ENCODE measurements at regions of chr1 and their contacts with region 1.

Region 1: DNA sequence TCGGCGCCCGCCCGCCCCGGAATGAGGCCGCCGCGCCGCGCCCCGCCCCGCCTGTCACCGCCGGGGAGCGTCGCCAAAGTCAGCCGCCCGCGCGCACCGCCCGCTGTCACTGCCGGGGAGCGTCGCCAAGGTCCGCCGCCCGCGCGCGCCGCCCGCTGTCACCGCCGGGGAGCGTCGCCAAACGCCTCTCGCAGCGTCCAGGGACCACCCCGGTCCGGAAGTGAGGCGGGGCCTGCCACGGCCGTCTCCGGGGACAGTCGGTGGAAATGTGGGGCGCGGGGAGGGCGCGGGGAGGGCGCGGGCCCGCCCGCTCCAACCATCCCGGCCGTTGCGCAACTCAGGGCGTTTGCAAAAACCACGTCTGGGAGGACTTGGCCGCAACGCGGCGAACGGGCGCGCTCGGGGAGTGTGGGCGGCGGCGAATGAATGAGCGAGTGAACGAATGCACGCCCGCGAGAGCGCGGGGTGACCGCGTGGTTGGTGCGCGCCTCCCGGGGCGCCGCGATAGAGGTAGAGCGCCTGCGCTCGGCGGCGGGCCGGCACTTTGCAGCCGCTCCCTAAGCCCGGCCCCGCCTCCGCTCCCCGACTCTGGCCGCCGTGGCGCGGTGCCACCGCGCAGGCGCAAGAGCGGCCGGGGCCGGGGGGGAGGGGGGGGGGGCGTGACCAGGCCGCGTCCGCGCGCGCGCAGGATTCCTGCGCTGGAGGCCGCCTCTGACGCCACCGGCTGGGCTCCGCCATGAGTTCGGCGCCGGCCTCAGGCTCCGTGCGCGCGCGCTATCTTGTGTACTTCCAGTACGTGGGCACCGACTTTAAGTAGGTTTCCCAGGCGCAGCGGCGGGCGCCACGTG is at the starts of genes ACAP3 and PUSL1:
- DNase-seq: peak; percentile 94
- ATAC-seq: peak; percentile 73
- H3K4me3 Mint-ChIP-seq: peak within 1 kb of the TSS; percentile 80
- H3K27ac Mint-ChIP-seq: peak within 1 kb of the TSS; percentile 84
- H3K4me1 Mint-ChIP-seq: peaks cover 23% of the 10 kb centered on the region
- H3K27me3 Mint-ChIP-seq: no peaks in the 10 kb centered on the region
- total RNA-seq, gene ACAP3: 17.5 to 24.3 TPM
- total RNA-seq, gene PUSL1: 13.7 to 18.0 TPM

Region 2: GRCh38 chr1:1019122-1019999 is 288.8 kb before region 1 on chr1:
- CTCF ChIA-PET with region 1: no interaction called
- POLR2A ChIA-PET with region 1: no interaction called
- intact Hi-C with region 1: loop called in 1 of 2 experiments (anchors 1 kb)
- DNase-seq: peak; percentile 90
- ATAC-seq: peak; percentile 75
- H3K4me3 Mint-ChIP-seq: peak overlapping the region; percentile 59
- H3K27ac Mint-ChIP-seq: no peak overlapping the region
- H3K4me1 Mint-ChIP-seq: peaks cover 15% of the 10 kb centered on the region
- H3K27me3 Mint-ChIP-seq: peaks cover 9% of the 10 kb centered on the region

Region 3: DNA sequence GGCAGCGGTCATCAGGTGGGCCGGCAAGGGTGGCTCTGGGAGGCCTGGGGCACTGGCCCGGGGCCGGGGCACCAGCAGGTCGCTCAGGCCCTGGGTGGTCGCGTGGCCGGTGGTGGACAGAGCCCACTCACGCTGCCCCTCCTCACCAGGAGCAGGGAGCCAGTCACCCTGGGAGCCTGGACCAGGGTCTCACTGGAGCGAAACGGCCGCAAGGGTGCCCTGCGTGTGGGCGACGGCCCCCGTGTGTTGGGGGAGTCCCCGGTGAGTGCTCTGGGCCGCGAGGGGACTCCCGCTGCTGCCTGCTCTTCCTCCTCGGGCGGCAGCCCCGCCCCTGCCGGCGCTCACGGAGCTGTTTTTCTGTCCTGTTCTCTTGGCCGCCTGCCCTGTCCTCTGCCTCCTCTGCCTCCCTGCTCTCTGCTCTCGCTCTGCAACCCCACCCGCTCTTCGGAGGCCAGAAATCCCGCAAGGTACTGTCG is 257.5 kb before region 1 on chr1:
- CTCF ChIA-PET with region 1: no interaction called
- POLR2A ChIA-PET with region 1: no interaction called
- intact Hi-C with region 1: no loop called
- DNase-seq: no peak
- ATAC-seq: no peak
- H3K4me3 Mint-ChIP-seq: no peak overlapping the region
- H3K27ac Mint-ChIP-seq: no peak overlapping the region
- H3K4me1 Mint-ChIP-seq: no peaks in the 10 kb centered on the region
- H3K27me3 Mint-ChIP-seq: no peaks in the 10 kb centered on the region

Region 4: DNA sequence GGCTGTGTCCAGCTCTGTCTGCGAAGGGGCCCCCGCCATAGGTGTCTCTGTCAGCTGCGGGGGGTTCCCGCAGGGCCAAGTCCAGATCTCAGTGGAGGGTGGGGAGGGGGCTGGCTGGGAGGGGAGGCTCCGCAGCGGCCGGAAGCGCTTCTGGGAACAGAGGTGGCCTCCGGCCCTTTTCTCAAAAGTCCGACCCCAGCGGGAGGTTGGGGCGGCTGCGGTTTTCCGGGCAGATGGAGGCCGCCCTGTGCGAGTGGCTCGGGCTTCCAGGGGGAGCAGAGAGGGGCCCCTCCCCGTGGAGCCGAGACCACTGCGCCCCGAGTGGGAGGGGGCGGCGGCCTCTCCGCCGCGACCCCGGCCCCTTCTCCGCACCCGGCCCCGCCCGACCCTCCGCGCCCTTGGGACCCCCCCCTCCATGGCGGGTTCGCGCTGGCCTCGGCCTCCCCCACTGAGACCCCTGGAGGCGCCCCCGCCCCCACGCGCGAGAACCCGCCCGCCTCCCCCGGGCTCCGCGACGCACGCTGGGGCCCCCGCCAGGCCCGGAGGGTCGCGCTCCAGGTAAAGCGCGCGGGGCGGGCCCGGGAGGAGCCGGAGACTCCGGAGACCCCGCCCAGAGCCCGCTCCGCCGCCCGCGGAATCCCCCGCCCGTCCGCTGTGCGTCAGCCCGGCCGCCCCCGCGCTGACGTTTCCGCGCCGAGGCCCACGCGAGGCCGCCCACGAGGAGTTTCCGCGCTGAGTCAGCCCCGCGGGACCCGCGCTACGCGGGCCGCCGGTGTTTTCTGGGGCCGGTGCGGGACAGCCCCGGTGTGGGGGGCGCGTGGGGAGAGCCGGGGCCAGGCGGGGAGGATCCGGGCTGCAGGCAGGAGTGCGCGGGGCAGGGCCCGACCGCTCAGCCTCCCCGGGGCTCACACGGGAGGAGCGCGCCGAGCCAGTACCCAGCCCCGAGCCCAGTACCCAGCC is 107.0 kb before region 1 on chr1:
- CTCF ChIA-PET with region 1: no interaction called
- POLR2A ChIA-PET with region 1: no interaction called
- intact Hi-C with region 1: loop called in 1 of 2 experiments (anchors 1 kb)
- DNase-seq: peak; percentile 94
- ATAC-seq: peak; percentile 78
- H3K4me3 Mint-ChIP-seq: peak overlapping the region; percentile 69
- H3K27ac Mint-ChIP-seq: peak overlapping the region; percentile 85
- H3K4me1 Mint-ChIP-seq: peaks cover 12% of the 10 kb centered on the region
- H3K27me3 Mint-ChIP-seq: no peaks in the 10 kb centered on the region

Region 5: GRCh38 chr1:1281533-1282321 is 26.4 kb before region 1 on chr1:
- CTCF ChIA-PET with region 1: no interaction called
- POLR2A ChIA-PET with region 1: no interaction called
- intact Hi-C with region 1: no loop called
- DNase-seq: peak; percentile 61
- ATAC-seq: peak; percentile 75
- H3K4me3 Mint-ChIP-seq: no peak overlapping the region
- H3K27ac Mint-ChIP-seq: no peak overlapping the region
- H3K4me1 Mint-ChIP-seq: no peaks in the 10 kb centered on the region
- H3K27me3 Mint-ChIP-seq: no peaks in the 10 kb centered on the region

Region 6: GRCh38 chr1:1324521-1325287 is 16.6 kb after region 1 on chr1 and contains the starts of genes CPTP and INTS11:
- CTCF ChIA-PET with region 1: interaction called, 4 read pairs
- POLR2A ChIA-PET with region 1: interaction called, 3 read pairs
- intact Hi-C with region 1: loop called in 1 of 2 experiments (anchors 1 kb)
- DNase-seq: peak; percentile 98
- ATAC-seq: peak; percentile 90
- H3K4me3 Mint-ChIP-seq: peak within 1 kb of the TSS; percentile 80
- H3K27ac Mint-ChIP-seq: peak within 1 kb of the TSS; percentile 83
- H3K4me1 Mint-ChIP-seq: peaks cover 31% of the 10 kb centered on the region
- H3K27me3 Mint-ChIP-seq: no peaks in the 10 kb centered on the region
- total RNA-seq, gene CPTP: 9.9 to 11.4 TPM
- total RNA-seq, gene INTS11: 117 to 151 TPM

Region 7: DNA sequence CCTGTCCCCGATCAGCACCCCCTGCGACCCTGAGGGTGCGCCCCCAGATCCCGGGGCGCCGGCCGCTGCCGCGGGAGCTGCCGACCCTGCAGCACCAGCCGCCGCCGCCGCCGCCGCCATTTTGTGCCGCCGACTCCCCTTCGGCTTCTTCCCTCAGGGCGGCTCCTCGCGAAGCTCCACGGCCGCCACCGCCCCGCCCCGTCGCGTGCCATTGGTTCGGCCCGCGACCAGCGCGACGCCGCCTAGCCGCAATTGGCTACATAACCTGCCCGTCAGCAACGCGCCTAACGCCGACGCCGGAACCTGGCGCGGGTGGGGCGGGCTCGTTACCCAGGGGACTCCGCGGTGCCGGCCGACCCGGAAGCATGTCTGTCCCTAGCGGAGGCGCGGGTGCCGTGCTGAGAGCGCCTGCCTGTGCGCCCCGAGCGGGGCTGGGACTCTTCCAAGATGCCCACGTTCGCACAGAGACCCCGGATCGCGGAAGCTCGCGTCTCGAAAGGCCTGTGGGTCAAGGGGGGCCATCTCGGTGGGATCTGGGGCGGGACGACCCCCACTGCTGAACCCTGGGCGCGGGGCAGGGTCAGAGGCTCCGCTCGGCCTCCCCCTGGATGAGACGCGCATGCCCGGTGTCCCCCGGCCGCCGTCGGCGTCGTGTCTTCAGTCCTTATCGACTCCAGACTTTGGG is 91.2 kb after region 1 on chr1 and contains the start of gene CCNL2:
- CTCF ChIA-PET with region 1: interaction called, 4 read pairs
- POLR2A ChIA-PET with region 1: no interaction called
- intact Hi-C with region 1: loop called in 1 of 2 experiments (anchors 1 kb)
- DNase-seq: peak; percentile 100
- ATAC-seq: peak; percentile 97
- H3K4me3 Mint-ChIP-seq: peak within 1 kb of the TSS; percentile 93
- H3K27ac Mint-ChIP-seq: peak within 1 kb of the TSS; percentile 91
- H3K4me1 Mint-ChIP-seq: peaks cover 52% of the 10 kb centered on the region
- H3K27me3 Mint-ChIP-seq: no peaks in the 10 kb centered on the region
- total RNA-seq, gene CCNL2: 73.6 to 89.7 TPM

Region 8: DNA sequence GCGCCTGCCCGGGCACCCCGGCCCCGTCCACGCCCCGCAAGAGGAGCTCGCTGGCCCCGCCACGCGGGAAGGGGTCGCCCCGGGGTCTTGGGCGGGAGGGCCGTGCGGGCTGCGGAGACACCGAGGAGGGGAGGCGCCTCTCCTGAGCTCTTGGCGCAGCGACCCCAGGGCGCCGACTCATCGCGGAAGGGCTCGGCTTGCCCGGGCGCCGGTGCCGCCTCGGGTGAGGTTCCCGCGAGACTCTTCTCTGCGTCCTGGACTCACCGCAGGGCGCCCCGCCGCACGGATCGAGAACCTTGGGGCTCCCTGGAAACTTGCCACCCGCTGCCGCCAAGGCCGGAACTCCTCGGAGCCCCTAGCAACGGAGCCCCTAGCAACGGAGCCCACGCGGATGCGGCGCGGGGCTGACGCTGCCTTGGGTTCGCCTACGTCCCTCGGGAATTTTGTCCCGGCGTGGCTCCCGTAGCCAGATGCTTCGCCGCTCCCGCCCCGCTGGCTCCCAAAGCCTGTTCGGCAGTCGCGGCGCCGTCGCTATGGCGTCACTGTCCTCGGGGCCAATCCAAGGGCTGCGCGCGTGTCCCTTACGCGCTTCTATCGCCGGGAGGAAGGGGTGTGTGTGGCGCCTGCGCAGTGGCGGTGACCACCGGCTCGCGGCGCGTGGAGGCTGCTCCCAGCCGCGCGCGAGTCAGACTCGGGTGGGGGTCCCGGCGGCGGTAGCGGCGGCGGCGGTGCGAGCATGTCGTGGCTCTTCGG is 203.6 kb after region 1 on chr1 and contains the start of gene ATAD3A:
- CTCF ChIA-PET with region 1: no interaction called
- POLR2A ChIA-PET with region 1: no interaction called
- intact Hi-C with region 1: loop called in 1 of 2 experiments (anchors 1 kb)
- DNase-seq: peak; percentile 99
- ATAC-seq: peak; percentile 97
- H3K4me3 Mint-ChIP-seq: peak within 1 kb of the TSS; percentile 93
- H3K27ac Mint-ChIP-seq: peak within 1 kb of the TSS; percentile 97
- H3K4me1 Mint-ChIP-seq: peaks cover 7% of the 10 kb centered on the region
- H3K27me3 Mint-ChIP-seq: no peaks in the 10 kb centered on the region
- total RNA-seq, gene ATAD3A: 39.9 to 42.9 TPM

Region 9: DNA sequence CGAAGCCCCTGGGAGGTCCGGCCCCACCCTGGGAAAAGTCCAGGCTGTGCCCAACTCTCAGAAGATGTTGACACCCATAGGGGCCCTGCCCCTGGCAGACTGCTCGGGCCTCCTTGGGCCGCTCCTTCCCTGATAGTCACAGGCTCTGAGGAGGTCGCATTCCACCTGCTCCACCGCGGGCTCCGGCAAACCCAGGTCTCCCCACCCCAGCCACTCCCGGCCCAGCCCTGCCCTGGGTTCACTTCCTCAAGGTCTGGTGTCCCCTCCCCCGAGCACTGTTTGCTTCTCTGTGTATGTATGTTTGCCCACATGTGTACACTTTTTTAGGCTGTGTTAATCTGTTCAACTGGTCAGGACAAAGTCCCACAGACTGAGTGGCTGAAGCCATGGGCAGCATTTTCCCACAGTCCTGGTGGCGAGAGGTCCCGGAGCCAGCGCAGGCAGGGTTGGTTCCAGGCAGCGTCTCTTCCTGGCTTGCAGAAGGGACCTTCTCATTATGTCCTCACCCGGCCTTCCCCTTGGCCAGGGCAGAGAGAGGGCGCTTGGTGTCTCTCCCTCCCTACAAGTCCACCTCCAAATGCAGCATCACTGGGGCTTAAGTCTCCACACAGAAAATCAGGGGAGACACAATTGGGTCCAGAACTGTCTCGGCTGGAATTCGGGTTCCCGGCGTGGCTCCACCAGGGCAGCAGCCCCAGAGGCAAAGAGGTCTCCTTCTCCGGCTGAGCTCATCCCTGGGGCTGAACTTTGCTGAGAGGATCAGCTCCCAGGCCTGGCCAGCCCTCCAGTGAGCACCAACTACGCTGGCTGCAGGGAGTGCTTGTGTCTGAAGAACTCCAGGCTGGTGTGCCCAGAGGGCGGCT is 1267.9 kb after region 1 on chr1:
- CTCF ChIA-PET with region 1: no interaction called
- POLR2A ChIA-PET with region 1: no interaction called
- intact Hi-C with region 1: loop called in 1 of 2 experiments (anchors 5 kb)
- DNase-seq: no peak
- ATAC-seq: no peak
- H3K4me3 Mint-ChIP-seq: peak overlapping the region; percentile 62
- H3K27ac Mint-ChIP-seq: peak overlapping the region; percentile 98
- H3K4me1 Mint-ChIP-seq: peaks cover 43% of the 10 kb centered on the region
- H3K27me3 Mint-ChIP-seq: no peaks in the 10 kb centered on the region

Measured in activated CD4-positive, alpha-beta T cell treated with anti-CD3 and anti-CD28 coated beads for 36 hours (primary cell).